Naive thymus-derived CD4-positive, alpha-beta T cell (primary cell): ENCODE measurements at regions of chr16 and their contacts with region 1.

Region 1: DNA sequence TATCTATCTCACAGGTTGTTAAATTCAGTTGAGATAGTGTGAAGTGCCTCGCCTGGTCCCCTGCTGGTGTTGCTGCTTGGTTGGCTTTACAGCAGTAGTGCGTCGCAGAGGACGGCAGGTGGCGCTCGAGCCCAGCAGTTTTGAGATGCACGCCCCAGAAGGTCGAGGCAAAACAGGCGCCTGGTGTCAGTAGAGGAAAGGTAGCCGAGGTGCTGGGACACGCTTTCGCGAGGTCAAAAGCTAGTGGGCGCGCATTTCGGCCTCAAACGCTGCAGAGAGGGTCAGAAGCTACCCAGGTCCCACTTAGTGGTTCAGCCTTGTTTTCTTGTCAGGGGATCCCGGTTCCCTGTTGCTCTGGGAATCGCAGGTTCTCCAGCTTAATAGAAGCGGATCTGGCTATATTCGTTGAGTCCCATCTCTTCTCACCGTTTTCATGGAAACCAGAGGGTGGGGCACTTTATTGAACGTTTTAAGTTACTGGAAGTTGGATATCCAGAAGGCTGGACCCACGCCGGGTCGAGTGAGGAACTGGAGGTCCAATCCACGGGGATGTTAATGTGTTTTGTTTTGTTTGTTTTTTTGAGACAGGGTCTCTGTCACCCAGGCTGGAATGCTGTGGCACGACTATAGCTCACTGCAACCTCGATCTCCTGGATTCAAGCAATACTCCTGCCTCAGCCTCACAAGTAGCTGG is 10.3 kb upstream of the ZFP90 start:
- DNase-seq: peak; percentile 80 to 91 (median 87)
- ATAC-seq: peak; percentile 92
- H3K4me3 ChIP-seq: no peak overlapping the region
- H3K4me3 Mint-ChIP-seq: peak overlapping the region; percentile 71 to 95 (median 90)
- H3K27ac ChIP-seq: no peak overlapping the region
- H3K27ac Mint-ChIP-seq: peak overlapping the region; percentile 45 to 94 (median 82)
- H3K4me1 ChIP-seq: peaks cover 7 to 19% of the 10 kb centered on the region in 2 donors
- H3K4me1 Mint-ChIP-seq: peaks cover 13 to 24% (median 21%) of the 10 kb centered on the region in 7 donors
- H3K27me3 ChIP-seq: no peaks in the 10 kb centered on the region
- H3K27me3 Mint-ChIP-seq: peaks cover 0 to 2% (median 0%) of the 10 kb centered on the region in 5 donors

Region 2: GRCh38 chr16:68105611-68106010 is 423.2 kb before region 1 on chr16:
- CTCF ChIA-PET with region 1: no interaction called
- POLR2A ChIA-PET with region 1: no interaction called
- intact Hi-C with region 1: no loop called
- DNase-seq: no peak
- ATAC-seq: no peak
- H3K4me3 ChIP-seq: no peak overlapping the region
- H3K4me3 Mint-ChIP-seq: peak overlapping the region in 5 of 10 donors; percentile 38 to 61 (median 47)
- H3K27ac ChIP-seq: no peak overlapping the region
- H3K27ac Mint-ChIP-seq: peak overlapping the region in 6 of 9 donors; percentile 19 to 84 (median 64)
- H3K4me1 ChIP-seq: peaks cover 20 to 38% of the 10 kb centered on the region in 2 donors
- H3K4me1 Mint-ChIP-seq: peaks cover 66 to 94% (median 86%) of the 10 kb centered on the region in 7 donors
- H3K27me3 ChIP-seq: no peaks in the 10 kb centered on the region
- H3K27me3 Mint-ChIP-seq: no peaks in the 10 kb centered on the region

Region 3: GRCh38 chr16:68590201-68590994 is 61.6 kb after region 1 on chr16:
- CTCF ChIA-PET with region 1: interaction called, 23 read pairs
- POLR2A ChIA-PET with region 1: interaction called, 3 read pairs
- intact Hi-C with region 1: loop called (anchors 5 kb)
- DNase-seq: peak; percentile 14 to 59 (median 52)
- ATAC-seq: peak; percentile 83
- H3K4me3 ChIP-seq: no peak overlapping the region
- H3K4me3 Mint-ChIP-seq: peak overlapping the region in 4 of 10 donors; percentile 12 to 60 (median 28)
- H3K27ac ChIP-seq: no peak overlapping the region
- H3K27ac Mint-ChIP-seq: peak overlapping the region in 2 of 9 donors; percentile 83 to 89
- H3K4me1 ChIP-seq: no peaks in the 10 kb centered on the region
- H3K4me1 Mint-ChIP-seq: peaks cover 2 to 9% (median 4%) of the 10 kb centered on the region in 7 donors
- H3K27me3 ChIP-seq: no peaks in the 10 kb centered on the region
- H3K27me3 Mint-ChIP-seq: peaks cover 0 to 8% (median 0%) of the 10 kb centered on the region in 5 donors

Region 4: DNA sequence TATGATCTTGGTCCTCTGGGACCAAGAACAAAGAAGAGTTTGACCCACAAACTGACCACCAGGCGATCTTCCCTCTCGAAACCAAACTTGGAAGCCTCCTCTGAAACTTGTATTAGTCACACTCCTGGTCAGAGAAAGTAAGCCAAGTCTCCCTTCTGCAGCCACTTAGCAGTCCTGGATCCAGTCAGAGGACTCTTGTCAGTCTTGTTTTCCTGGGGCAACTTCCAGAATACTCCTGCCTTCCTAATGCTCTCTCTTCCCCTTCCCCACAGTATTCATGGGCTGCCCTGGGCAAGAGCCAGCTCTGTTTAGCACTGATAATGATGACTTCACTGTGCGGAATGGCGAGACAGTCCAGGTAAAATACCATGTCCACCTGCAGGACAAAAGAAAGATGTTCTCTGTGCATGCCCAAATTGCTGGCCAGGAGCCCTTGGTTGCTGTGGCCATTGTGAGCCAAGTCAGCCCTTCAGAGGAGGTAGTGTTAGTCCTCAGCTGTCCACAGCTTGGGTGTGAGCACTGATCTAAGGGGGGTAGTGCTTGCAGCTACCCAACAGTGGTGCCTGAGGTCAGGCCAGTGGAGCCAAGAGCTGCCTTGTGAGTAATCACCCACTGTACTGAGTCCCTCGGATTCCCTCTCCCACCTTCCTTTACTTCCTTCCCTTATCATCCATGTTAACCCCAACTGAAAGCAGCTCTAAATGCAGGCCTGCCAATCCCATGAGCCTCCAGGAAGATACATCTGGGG is 147.5 kb after region 1 on chr16:
- CTCF ChIA-PET with region 1: no interaction called
- POLR2A ChIA-PET with region 1: no interaction called
- intact Hi-C with region 1: no loop called
- DNase-seq: no peak
- ATAC-seq: no peak
- H3K4me3 ChIP-seq: no peak overlapping the region
- H3K4me3 Mint-ChIP-seq: no peak overlapping the region
- H3K27ac ChIP-seq: no peak overlapping the region
- H3K27ac Mint-ChIP-seq: no peak overlapping the region
- H3K4me1 ChIP-seq: no peaks in the 10 kb centered on the region
- H3K4me1 Mint-ChIP-seq: no peaks in the 10 kb centered on the region
- H3K27me3 ChIP-seq: no peaks in the 10 kb centered on the region
- H3K27me3 Mint-ChIP-seq: peaks cover 0 to 5% (median 0%) of the 10 kb centered on the region in 5 donors

Region 5: GRCh38 chr16:68704232-68704867 is 175.5 kb after region 1 on chr16:
- CTCF ChIA-PET with region 1: no interaction called
- POLR2A ChIA-PET with region 1: no interaction called
- intact Hi-C with region 1: loop called (anchors 1 kb)
- DNase-seq: peak in 8 of 9 donors; percentile 9 to 66 (median 31)
- ATAC-seq: peak; percentile 72
- H3K4me3 ChIP-seq: no peak overlapping the region
- H3K4me3 Mint-ChIP-seq: no peak overlapping the region
- H3K27ac ChIP-seq: no peak overlapping the region
- H3K27ac Mint-ChIP-seq: no peak overlapping the region
- H3K4me1 ChIP-seq: no peaks in the 10 kb centered on the region
- H3K4me1 Mint-ChIP-seq: peaks cover 0 to 4% (median 0%) of the 10 kb centered on the region in 7 donors
- H3K27me3 ChIP-seq: no peaks in the 10 kb centered on the region
- H3K27me3 Mint-ChIP-seq: no peaks in the 10 kb centered on the region

Region 6: DNA sequence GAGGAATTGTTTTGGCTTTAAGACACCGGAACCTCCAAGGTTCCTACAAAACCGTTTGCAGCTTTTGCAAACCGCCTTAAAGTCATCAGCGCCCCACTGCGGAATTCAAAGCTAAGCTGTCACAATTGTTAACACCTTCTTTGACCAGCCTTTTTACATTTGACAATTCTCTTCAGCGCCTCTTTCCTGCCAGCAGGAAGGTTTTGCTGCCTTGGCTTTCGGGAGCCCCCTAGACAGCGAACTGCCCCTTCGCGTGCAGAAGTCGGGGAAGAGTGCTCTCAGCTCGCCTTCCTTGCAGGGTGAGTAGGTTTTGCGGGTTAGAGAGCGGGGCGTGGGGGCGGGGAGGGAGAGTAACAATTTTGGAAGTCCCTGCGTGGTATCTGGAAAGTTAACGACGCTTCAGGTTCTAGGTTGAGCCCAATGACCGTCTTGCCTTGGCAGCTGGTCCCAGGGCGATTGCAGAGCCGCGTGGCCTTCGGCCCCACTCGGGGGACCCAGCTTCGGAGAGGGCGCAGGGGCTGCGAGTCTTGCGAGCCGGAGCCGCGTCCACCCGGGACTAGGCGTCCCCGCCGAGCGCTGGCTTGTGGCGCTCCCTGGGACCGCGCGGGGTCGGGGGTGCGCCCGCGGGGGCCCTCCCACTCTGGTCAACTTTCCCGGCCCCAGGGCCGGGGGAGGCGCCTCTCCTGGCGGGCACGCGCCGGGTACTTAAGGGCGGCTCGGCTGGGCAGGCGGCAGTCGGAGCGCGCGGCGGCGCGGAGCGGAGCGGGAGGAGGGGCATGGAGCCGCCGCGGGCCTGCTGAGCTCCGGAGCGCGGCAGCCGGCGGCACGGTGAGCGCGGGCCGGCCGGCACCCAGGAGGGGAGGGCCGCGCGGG is 576.9 kb after region 1 on chr16 and contains the start of gene HAS3:
- CTCF ChIA-PET with region 1: no interaction called
- POLR2A ChIA-PET with region 1: no interaction called
- intact Hi-C with region 1: loop called (anchors 5 kb)
- DNase-seq: peak in 5 of 9 donors; percentile 11 to 60 (median 23)
- ATAC-seq: peak; percentile 66
- H3K4me3 ChIP-seq: peak within 1 kb of the TSS; percentile 51
- H3K4me3 Mint-ChIP-seq: peak within 1 kb of the TSS; percentile 84 to 96 (median 91)
- H3K27ac ChIP-seq: no peak within 1 kb of the TSS
- H3K27ac Mint-ChIP-seq: peak within 1 kb of the TSS in 2 of 9 donors; percentile 52 to 56
- H3K4me1 ChIP-seq: peaks cover 10 to 32% of the 10 kb centered on the region in 2 donors
- H3K4me1 Mint-ChIP-seq: peaks cover 12 to 26% (median 22%) of the 10 kb centered on the region in 7 donors
- H3K27me3 ChIP-seq: peaks cover 0 to 22% of the 10 kb centered on the region in 2 donors
- H3K27me3 Mint-ChIP-seq: peaks cover 30 to 49% (median 44%) of the 10 kb centered on the region in 5 donors
- total RNA-seq, gene HAS3: 0.73 to 4.2 (median 2.9) TPM

Region 7: DNA sequence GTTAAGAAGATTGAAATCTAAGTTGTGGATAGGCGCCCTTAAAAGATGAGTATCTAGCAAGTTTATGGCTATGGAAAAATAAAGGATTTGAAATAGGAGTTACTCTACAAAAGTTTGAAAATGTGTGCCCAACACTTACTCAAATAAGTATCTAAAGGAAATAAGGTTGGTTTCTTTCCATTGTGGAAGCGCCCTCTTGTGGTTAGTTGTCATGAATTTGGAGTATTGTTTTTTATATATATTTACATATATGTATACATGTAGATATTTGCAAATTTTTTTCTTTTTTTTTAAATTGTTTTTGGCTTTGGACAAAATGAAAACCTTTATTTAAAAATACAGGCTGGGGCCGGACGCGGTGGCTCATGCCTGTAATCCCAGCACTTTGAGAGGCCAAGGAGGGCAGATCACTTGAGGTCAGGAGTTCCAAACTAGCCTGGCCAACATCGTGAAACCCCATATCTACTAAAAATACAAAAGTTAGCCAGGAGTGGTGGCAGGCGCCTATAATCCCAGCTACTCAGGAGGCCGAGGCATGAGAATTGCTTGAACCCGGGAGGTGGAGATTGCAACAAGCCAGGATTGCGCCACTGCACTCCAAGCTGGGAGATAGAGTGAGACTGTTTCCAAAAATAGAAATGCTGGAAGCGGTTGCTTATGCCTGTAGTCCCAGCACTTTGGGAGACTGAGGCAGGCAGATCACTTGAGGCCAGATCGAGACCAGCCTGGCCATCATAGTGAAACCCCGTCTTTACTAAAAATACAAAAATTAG is 758.3 kb after region 1 on chr16:
- CTCF ChIA-PET with region 1: interaction called, 7 read pairs
- POLR2A ChIA-PET with region 1: no interaction called
- intact Hi-C with region 1: loop called in 1 of 2 experiments (anchors 5 kb)
- DNase-seq: peak in 7 of 9 donors; percentile 38 to 73 (median 65)
- ATAC-seq: peak; percentile 63
- H3K4me3 ChIP-seq: no peak overlapping the region
- H3K4me3 Mint-ChIP-seq: no peak overlapping the region
- H3K27ac ChIP-seq: no peak overlapping the region
- H3K27ac Mint-ChIP-seq: no peak overlapping the region
- H3K4me1 ChIP-seq: no peaks in the 10 kb centered on the region
- H3K4me1 Mint-ChIP-seq: peaks cover 0 to 2% (median 0%) of the 10 kb centered on the region in 7 donors
- H3K27me3 ChIP-seq: no peaks in the 10 kb centered on the region
- H3K27me3 Mint-ChIP-seq: no peaks in the 10 kb centered on the region